ENCODE measurements at regions of chr1 and their contacts with region 1.

Region 1: DNA sequence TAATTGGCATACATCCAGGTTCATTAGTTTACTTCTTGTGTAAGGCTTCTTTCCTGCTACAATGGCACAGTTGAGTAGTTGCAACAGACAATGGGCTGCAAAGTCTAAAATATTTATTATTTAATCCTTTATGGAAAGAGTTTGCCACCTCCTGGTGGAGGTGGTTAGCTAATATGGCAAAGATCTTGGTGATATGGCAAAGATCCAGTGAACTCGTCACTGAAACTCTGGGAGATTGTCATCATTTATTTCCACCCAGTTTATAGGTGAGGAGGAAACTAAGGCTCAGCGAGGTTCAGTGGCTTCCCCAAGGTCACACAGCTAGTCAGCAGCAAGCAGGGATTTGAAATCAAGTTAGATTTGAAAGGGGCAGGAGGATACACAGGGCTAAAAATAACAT is 16.1 kb upstream of the IFFO2 start:
- DNase-seq: no peak
- H3K4me3 ChIP-seq: no peak overlapping the region
- H3K27ac ChIP-seq: no peak overlapping the region
- H3K4me1 ChIP-seq: peaks cover 0 to 7% (median 0%) of the 10 kb centered on the region in 4 donors
- H3K27me3 ChIP-seq: no peaks in the 10 kb centered on the region
- CTCF ChIP-seq: peak in 4 of 5 experiments; percentile 28 to 43 (median 32)
- EP300 ChIP-seq: no peak
- POLR2A ChIP-seq: no peak

Region 2: GRCh38 chr1:18913065-18913835 is 59.3 kb before region 1 on chr1:
- in situ Hi-C with region 1: loop called in 2 of 4 experiments (anchors 5 to 10 kb)
- intact Hi-C with region 1: no loop called
- DNase-seq: peak; percentile 85
- H3K4me3 ChIP-seq: no peak overlapping the region
- H3K27ac ChIP-seq: peak overlapping the region; percentile 42 to 66 (median 56)
- H3K4me1 ChIP-seq: peaks cover 0 to 8% (median 5%) of the 10 kb centered on the region in 4 donors
- H3K27me3 ChIP-seq: no peaks in the 10 kb centered on the region
- CTCF ChIP-seq: peak; percentile 91 to 97 (median 93)
- EP300 ChIP-seq: no peak
- POLR2A ChIP-seq: no peak

Region 3: DNA sequence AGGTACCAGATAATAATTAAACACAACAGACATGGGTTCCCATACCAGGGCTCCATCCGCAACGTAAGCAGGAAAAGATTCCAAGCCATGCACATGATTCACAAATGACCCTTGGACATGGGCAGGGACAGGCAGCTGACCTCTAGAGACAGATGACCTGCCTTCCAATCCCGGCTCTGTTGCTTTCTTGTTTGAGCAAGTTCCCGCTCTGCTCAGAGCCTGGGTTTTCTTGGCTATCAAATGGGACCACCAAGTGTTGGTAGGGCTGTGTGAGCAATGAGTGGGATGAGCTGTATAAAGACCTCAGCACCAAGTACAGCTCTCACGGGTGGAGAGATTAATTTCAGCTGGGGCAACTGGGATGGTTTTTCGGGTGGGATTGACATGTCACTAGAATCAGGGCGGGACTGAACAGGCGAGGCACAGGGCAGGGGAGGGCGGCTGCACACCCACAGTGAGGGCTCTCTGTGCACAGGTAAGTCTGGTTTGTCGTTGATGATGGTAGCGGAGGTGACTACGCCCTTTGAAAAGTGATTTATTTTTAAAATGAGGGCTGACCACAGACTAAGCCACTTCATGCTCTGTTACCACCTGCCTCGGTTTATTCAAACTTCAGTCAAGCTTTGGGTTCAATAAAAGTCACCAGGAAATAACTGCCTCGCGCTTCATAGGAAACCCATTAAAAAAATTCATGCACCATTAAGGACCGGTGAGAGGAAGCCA is 41.5 kb after region 1 on chr1:
- in situ Hi-C with region 1: no loop called
- intact Hi-C with region 1: loop called (anchors 2 kb)
- DNase-seq: peak; percentile 58
- H3K4me3 ChIP-seq: no peak overlapping the region
- H3K27ac ChIP-seq: peak overlapping the region in 3 of 4 donors; percentile 17 to 31 (median 17)
- H3K4me1 ChIP-seq: peaks cover 8 to 43% (median 32%) of the 10 kb centered on the region in 4 donors
- H3K27me3 ChIP-seq: no peaks in the 10 kb centered on the region
- CTCF ChIP-seq: no peak
- EP300 ChIP-seq: no peak
- POLR2A ChIP-seq: no peak

Measured in transverse colon (tissue), 4 donors.